Mammary epithelial cell (primary cell): ENCODE measurements at regions of chr6 and their contacts with region 1.

Region 1: GRCh38 chr6:105780146-105780860 is 305.8 kb upstream of the PRDM1 start:
- DNase-seq: peak; percentile 90
- H3K4me3 ChIP-seq: no peak overlapping the region
- H3K27ac ChIP-seq: peak overlapping the region; percentile 78
- H3K4me1 ChIP-seq: peaks cover 18% of the 10 kb centered on the region
- H3K27me3 ChIP-seq: no peaks in the 10 kb centered on the region
- CTCF ChIP-seq: no peak

Region 2: DNA sequence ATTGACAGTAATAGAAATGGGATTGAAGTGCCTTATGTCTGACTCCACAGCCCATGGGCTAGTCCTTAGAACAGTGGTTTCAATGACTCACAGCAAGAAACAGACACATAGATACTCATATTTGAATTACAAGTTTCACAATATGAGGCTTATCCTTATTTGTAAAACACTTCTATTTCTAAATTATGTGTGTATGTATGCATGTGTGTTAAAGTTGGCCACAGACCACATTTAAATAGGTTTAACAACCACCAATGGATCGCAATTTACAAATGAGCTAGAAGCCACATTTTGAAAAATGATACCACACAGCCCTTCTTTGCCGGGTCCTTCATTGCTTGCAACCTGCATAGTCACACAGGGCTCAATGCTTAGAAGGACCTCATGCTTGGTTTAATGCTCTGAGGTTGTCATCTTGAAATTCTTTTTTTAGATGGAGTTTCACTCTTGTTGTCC is 219.7 kb before region 1 on chr6:
- CTCF ChIA-PET with region 1: no interaction called
- dilution Hi-C with region 1: no loop called
- in situ Hi-C with region 1: no loop called
- intact Hi-C with region 1: no loop called
- DNase-seq: peak; percentile 90
- H3K4me3 ChIP-seq: no peak overlapping the region
- H3K27ac ChIP-seq: peak overlapping the region; percentile 60
- H3K4me1 ChIP-seq: peaks cover 12% of the 10 kb centered on the region
- H3K27me3 ChIP-seq: no peaks in the 10 kb centered on the region
- CTCF ChIP-seq: no peak

Region 3: DNA sequence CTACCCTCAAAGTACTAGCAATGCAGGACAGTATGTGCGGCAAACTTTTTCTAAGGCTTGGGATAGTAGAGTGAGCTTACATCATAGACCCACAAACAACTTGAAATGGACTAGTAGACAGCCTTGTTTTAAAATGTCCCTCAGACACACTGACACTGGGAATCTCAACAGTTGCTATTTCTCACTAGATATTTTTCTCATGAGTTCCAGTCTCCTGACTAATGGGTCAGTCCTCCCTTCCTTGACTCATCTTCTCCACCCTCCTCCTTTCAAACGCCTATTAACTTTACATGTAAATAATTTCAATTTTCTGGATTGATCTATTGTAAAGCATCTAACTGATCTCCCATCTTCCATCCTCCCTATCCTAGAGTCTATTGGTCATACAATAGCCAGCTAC is 69.1 kb before region 1 on chr6:
- CTCF ChIA-PET with region 1: no interaction called
- dilution Hi-C with region 1: no loop called
- in situ Hi-C with region 1: no loop called
- intact Hi-C with region 1: no loop called
- DNase-seq: peak; percentile 35
- H3K4me3 ChIP-seq: no peak overlapping the region
- H3K27ac ChIP-seq: no peak overlapping the region
- H3K4me1 ChIP-seq: no peaks in the 10 kb centered on the region
- H3K27me3 ChIP-seq: no peaks in the 10 kb centered on the region
- CTCF ChIP-seq: no peak

Region 4: GRCh38 chr6:105886066-105886813 is 105.9 kb after region 1 on chr6:
- CTCF ChIA-PET with region 1: no interaction called
- dilution Hi-C with region 1: loop called (anchors 5 kb)
- in situ Hi-C with region 1: no loop called
- intact Hi-C with region 1: no loop called
- DNase-seq: no peak
- H3K4me3 ChIP-seq: no peak overlapping the region
- H3K27ac ChIP-seq: no peak overlapping the region
- H3K4me1 ChIP-seq: no peaks in the 10 kb centered on the region
- H3K27me3 ChIP-seq: no peaks in the 10 kb centered on the region
- CTCF ChIP-seq: no peak

Region 5: GRCh38 chr6:106334646-106335448 is 554.5 kb after region 1 on chr6:
- CTCF ChIA-PET with region 1: no interaction called
- dilution Hi-C with region 1: no loop called
- in situ Hi-C with region 1: no loop called
- intact Hi-C with region 1: no loop called
- DNase-seq: peak; percentile 53
- H3K4me3 ChIP-seq: no peak overlapping the region
- H3K27ac ChIP-seq: no peak overlapping the region
- H3K4me1 ChIP-seq: peaks cover 3% of the 10 kb centered on the region
- H3K27me3 ChIP-seq: no peaks in the 10 kb centered on the region
- CTCF ChIP-seq: peak; percentile 58 to 69

Region 6: DNA sequence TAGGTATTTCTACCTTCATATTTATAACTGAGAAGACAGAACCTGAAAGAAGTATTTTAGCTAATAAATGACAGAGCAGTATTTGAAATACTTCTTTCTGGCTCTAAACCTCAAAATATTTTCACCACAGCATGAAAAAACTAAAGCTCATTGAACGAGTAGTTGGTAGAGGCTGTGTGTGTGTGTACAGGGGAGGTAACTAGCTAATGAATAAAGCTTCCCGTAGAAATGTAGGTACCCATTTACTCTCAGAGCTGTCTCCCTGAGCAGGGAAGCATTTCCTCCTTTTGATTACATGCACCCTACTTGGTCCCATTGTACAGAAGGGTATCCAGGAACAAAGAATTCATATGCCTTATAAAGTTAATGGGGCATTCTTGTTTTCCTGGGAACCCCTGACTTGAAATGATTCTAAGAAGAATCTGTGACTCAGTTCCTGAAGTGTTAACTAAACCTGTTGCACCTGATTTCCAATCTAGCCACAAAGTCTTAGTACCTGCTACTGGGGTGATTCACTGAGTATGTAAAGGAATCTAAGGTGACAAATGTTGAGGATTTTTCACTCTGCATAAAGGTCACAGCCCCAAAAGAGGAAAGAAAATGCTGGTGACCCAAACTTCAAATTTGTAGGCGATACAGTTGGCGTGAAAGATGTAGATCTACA is 592.7 kb after region 1 on chr6:
- CTCF ChIA-PET with region 1: no interaction called
- dilution Hi-C with region 1: no loop called
- in situ Hi-C with region 1: no loop called
- intact Hi-C with region 1: no loop called
- DNase-seq: peak; percentile 86
- H3K4me3 ChIP-seq: no peak overlapping the region
- H3K27ac ChIP-seq: peak overlapping the region; percentile 86
- H3K4me1 ChIP-seq: peaks cover 78% of the 10 kb centered on the region
- H3K27me3 ChIP-seq: no peaks in the 10 kb centered on the region
- CTCF ChIP-seq: no peak